Dorsolateral prefrontal cortex (tissue), 120 donors: ENCODE measurements at regions of chr10 and their contacts with region 1.

Region 1: GRCh38 chr10:126663328-126663727 is 7.2 kb downstream of the C10orf90 start:
- DNase-seq: peak; percentile 21 to 96 (median 89)
- H3K4me3 ChIP-seq: peak overlapping the region in 31 of 59 donors; percentile 0 to 86 (median 27)
- H3K27ac ChIP-seq: peak overlapping the region; percentile 73 to 99 (median 97)
- H3K27me3 ChIP-seq: peaks cover 0 to 4% (median 0%) of the 10 kb centered on the region in 45 donors
- CTCF ChIP-seq: peak in 14 of 56 donors; percentile 5 to 33 (median 22)

Region 2: GRCh38 chr10:126561294-126561920 is 101.9 kb before region 1 on chr10:
- intact Hi-C with region 1: loop called (anchors 5 to 10 kb)
- DNase-seq: peak in 9 of 10 donors; percentile 46 to 78 (median 62)
- H3K4me3 ChIP-seq: peak overlapping the region in 58 of 59 donors; percentile 4 to 65 (median 47)
- H3K27ac ChIP-seq: peak overlapping the region; percentile 86 to 100 (median 98)
- H3K27me3 ChIP-seq: no peaks in the 10 kb centered on the region
- CTCF ChIP-seq: peak in 13 of 56 donors; percentile 6 to 51 (median 20)

Region 3: GRCh38 chr10:126609566-126609965 is 53.8 kb before region 1 on chr10:
- intact Hi-C with region 1: loop called in 1 of 2 experiments (anchors 10 kb)
- DNase-seq: peak in 9 of 10 donors; percentile 54 to 81 (median 65)
- H3K4me3 ChIP-seq: no peak overlapping the region
- H3K27ac ChIP-seq: peak overlapping the region in 48 of 59 donors; percentile 2 to 83 (median 56)
- H3K27me3 ChIP-seq: no peaks in the 10 kb centered on the region
- CTCF ChIP-seq: no peak

Region 4: GRCh38 chr10:126651467-126651866 is 11.9 kb before region 1 on chr10:
- intact Hi-C with region 1: loop called in 1 of 2 experiments (anchors 1 kb)
- DNase-seq: no peak
- H3K4me3 ChIP-seq: no peak overlapping the region
- H3K27ac ChIP-seq: peak overlapping the region in 22 of 59 donors; percentile 5 to 70 (median 42)
- H3K27me3 ChIP-seq: no peaks in the 10 kb centered on the region
- CTCF ChIP-seq: no peak